Activated CD4-positive, alpha-beta memory T cell treated with anti-CD3 and anti-CD28 coated beads for 36 hours (primary cell): ENCODE measurements at regions of chr15 and their contacts with region 1.

Region 1: GRCh38 chr15:91469632-91470567 is 369.8 kb downstream of the SV2B start:
- DNase-seq: peak; percentile 87
- H3K4me3 Mint-ChIP-seq: peak overlapping the region; percentile 27
- H3K27ac Mint-ChIP-seq: peak overlapping the region; percentile 83
- H3K4me1 Mint-ChIP-seq: peaks cover 58% of the 10 kb centered on the region
- H3K27me3 Mint-ChIP-seq: no peaks in the 10 kb centered on the region

Region 2: DNA sequence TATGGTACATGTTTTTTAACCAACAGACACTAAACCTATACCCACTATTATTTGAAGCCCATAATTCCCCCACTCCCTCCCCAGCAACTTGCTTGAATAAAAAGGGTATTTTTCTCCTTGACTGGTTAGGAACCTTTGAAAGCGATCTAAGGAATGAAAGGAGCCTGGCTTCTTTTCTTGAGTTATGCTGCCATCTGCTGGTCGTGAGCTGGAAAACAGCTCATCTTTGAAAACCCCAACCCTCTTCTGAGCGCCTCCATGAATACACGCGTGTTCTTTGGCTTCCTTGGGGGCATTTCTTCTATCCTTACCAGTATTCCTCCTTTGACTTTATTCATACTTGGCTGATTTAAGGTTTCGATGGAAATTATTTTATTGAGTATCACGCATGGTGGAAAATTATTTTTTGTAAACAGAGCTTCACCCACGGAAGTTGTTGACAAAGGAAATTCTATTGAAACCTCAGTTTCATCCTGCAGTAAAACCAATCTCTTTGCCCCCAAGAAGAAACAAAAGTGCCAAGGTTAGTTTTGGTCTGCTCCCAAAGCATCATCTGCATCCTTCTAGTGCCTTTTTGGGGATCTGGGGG is 198.2 kb before region 1 on chr15:
- CTCF ChIA-PET with region 1: no interaction called
- POLR2A ChIA-PET with region 1: no interaction called
- intact Hi-C with region 1: no loop called
- DNase-seq: peak; percentile 72
- H3K4me3 Mint-ChIP-seq: peak overlapping the region; percentile 16
- H3K27ac Mint-ChIP-seq: no peak overlapping the region
- H3K4me1 Mint-ChIP-seq: peaks cover 8% of the 10 kb centered on the region
- H3K27me3 Mint-ChIP-seq: peaks cover 17% of the 10 kb centered on the region

Region 3: DNA sequence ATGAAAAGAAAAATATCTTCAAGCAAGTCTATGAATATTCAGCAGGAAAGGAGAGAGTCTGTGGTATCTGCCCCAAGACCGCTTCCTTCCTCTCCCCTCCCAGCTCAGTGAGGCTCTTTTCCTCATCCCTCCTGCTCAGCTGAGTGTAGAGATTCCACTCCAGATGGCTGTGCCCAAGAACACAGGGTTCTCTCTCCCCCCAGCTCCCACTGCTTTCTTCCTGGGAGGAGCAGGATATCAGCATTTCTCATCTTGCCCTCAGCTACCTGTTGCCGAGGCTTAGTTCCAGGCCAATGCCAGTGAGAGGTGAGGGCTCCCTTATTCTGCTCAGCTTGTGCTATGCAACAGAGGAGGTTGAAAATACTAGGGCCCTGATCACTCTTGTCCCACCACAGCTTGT is 157.9 kb before region 1 on chr15:
- CTCF ChIA-PET with region 1: no interaction called
- POLR2A ChIA-PET with region 1: no interaction called
- intact Hi-C with region 1: loop called (anchors 2 kb)
- DNase-seq: peak; percentile 44
- H3K4me3 Mint-ChIP-seq: no peak overlapping the region
- H3K27ac Mint-ChIP-seq: no peak overlapping the region
- H3K4me1 Mint-ChIP-seq: peaks cover 62% of the 10 kb centered on the region
- H3K27me3 Mint-ChIP-seq: peaks cover 3% of the 10 kb centered on the region

Region 4: GRCh38 chr15:91426412-91426811 is 43.5 kb before region 1 on chr15:
- CTCF ChIA-PET with region 1: no interaction called
- POLR2A ChIA-PET with region 1: no interaction called
- intact Hi-C with region 1: loop called (anchors 1 kb)
- DNase-seq: peak; percentile 75
- H3K4me3 Mint-ChIP-seq: no peak overlapping the region
- H3K27ac Mint-ChIP-seq: no peak overlapping the region
- H3K4me1 Mint-ChIP-seq: peaks cover 51% of the 10 kb centered on the region
- H3K27me3 Mint-ChIP-seq: no peaks in the 10 kb centered on the region

Region 5: DNA sequence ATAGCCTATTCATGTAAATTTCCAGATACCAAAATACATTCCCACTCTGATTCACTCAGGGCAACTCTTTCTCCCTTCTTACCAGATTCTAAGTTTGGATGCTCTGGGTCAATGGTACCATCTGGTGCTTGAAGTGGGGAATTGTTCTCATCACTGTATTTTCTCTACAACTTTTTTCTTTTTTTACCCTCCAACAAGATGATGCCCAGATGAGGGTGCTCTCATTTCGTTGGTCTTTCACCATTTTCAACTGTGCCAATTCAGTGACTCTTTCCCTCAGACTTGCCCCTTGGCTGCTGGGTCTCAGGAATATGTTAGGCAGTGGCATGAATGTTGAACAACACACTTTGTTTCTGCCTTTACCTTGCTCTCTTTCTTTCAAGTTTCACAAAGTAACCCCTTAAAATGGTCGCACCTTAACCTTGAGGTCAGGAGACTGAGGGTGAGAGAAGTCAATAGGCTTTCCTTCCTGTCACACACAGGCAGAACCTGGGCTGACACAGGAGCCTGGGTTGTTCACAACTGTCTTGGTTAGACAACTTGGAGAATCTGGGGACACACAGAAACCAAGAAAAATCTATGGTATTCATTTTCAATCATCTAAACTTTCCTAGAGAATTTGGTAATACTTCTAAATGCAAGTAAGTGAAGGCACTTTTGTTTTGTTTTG is 52.9 kb after region 1 on chr15:
- CTCF ChIA-PET with region 1: no interaction called
- POLR2A ChIA-PET with region 1: no interaction called
- intact Hi-C with region 1: loop called (anchors 1 kb)
- DNase-seq: no peak
- H3K4me3 Mint-ChIP-seq: no peak overlapping the region
- H3K27ac Mint-ChIP-seq: no peak overlapping the region
- H3K4me1 Mint-ChIP-seq: peaks cover 28% of the 10 kb centered on the region
- H3K27me3 Mint-ChIP-seq: no peaks in the 10 kb centered on the region

Region 6: DNA sequence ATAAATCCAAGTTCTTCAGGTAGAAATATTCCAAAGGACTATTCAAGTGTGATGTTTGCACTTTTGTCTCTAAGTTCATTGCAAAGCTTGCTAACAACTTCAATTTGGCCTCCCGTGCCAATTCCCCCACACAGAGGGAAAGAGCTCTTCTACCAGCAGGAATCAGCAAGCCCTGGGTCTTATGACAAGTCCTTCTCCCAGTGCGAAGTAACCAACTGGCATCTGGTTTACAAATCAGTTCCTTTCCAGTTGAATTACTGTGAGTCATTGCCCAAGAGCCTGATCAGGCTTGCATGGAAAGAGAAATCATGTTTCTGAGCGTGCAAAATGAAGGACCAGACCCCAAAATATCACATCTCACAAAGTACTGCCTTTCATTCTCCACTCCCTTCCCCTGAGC is 320.9 kb after region 1 on chr15:
- CTCF ChIA-PET with region 1: no interaction called
- POLR2A ChIA-PET with region 1: no interaction called
- intact Hi-C with region 1: no loop called
- DNase-seq: no peak
- H3K4me3 Mint-ChIP-seq: no peak overlapping the region
- H3K27ac Mint-ChIP-seq: no peak overlapping the region
- H3K4me1 Mint-ChIP-seq: no peaks in the 10 kb centered on the region
- H3K27me3 Mint-ChIP-seq: peaks cover 13% of the 10 kb centered on the region

Region 7: DNA sequence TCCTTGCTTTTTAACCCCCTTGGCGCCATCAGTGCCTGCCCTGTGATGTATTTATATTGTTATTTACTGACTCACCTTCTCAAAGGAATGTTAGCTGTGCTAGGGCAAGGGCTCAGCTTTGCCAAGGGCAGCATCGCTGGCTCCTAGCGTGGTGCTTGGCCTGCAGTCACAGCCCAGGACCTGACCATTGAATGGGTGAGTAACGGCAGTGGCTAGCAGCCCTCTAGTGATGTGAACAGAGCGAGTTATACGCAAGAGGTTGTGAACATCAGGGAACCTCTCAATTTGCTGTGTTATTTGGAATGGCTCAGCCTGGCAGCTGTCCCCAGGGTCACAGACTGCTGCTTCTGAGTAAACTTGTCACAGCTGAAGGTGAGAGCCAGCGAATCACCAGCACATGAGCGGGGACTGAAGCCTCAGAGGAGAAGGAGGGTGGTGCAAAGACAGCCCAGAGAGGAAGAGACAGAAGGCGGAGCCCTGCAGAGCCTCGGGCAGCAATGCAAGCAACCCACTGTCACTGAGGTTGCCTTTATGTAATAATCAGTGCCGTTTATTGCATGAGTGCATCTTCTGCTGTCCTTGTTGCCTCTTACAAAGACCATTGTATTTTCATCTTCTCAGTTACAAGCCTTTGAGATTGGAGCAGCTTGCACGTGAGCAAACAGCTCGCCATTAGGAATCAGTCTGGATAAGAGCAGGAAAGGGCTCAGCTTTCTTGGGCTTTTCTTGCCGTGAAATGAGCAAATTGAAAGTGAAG is 541.9 kb after region 1 on chr15:
- CTCF ChIA-PET with region 1: no interaction called
- POLR2A ChIA-PET with region 1: no interaction called
- intact Hi-C with region 1: loop called (anchors 5 kb)
- DNase-seq: peak; percentile 67
- H3K4me3 Mint-ChIP-seq: peak overlapping the region; percentile 39
- H3K27ac Mint-ChIP-seq: peak overlapping the region; percentile 66
- H3K4me1 Mint-ChIP-seq: peaks cover 71% of the 10 kb centered on the region
- H3K27me3 Mint-ChIP-seq: no peaks in the 10 kb centered on the region